IMR-90 (cell line): ENCODE measurements at regions of chr2 and their contacts with region 1.

Region 1: GRCh38 chr2:102915128-102915527 is 153.3 kb downstream of the TMEM182 start:
- DNase-seq: peak; percentile 45
- ATAC-seq: no peak
- H3K4me3 ChIP-seq: no peak overlapping the region
- H3K27ac ChIP-seq: no peak overlapping the region
- H3K4me1 ChIP-seq: no peaks in the 10 kb centered on the region
- H3K27me3 ChIP-seq: no peaks in the 10 kb centered on the region
- CTCF ChIP-seq: no peak
- POLR2A ChIP-seq: no peak
- RAD21 ChIP-seq: no peak

Region 2: GRCh38 chr2:103208916-103209315 is 293.8 kb after region 1 on chr2:
- CTCF ChIA-PET with region 1: no interaction called
- POLR2A ChIA-PET with region 1: no interaction called
- dilution Hi-C with region 1: no loop called
- in situ Hi-C with region 1: no loop called
- intact Hi-C with region 1: loop called (anchors 5 kb)
- DNase-seq: no peak
- ATAC-seq: no peak
- H3K4me3 ChIP-seq: no peak overlapping the region
- H3K27ac ChIP-seq: no peak overlapping the region
- H3K4me1 ChIP-seq: no peaks in the 10 kb centered on the region
- H3K27me3 ChIP-seq: no peaks in the 10 kb centered on the region
- CTCF ChIP-seq: no peak
- POLR2A ChIP-seq: no peak
- RAD21 ChIP-seq: no peak